ENCODE measurements at regions of chr2 and their contacts with region 1.

Region 1: GRCh38 chr2:201257956-201258665 is 2.2 kb upstream of the CASP8 start:
- DNase-seq: peak; percentile 98
- H3K4me3 Mint-ChIP-seq: peak overlapping the region; percentile 78
- H3K27ac Mint-ChIP-seq: peak overlapping the region; percentile 97
- H3K4me1 Mint-ChIP-seq: peaks cover 71% of the 10 kb centered on the region
- H3K27me3 Mint-ChIP-seq: no peaks in the 10 kb centered on the region

Region 2: DNA sequence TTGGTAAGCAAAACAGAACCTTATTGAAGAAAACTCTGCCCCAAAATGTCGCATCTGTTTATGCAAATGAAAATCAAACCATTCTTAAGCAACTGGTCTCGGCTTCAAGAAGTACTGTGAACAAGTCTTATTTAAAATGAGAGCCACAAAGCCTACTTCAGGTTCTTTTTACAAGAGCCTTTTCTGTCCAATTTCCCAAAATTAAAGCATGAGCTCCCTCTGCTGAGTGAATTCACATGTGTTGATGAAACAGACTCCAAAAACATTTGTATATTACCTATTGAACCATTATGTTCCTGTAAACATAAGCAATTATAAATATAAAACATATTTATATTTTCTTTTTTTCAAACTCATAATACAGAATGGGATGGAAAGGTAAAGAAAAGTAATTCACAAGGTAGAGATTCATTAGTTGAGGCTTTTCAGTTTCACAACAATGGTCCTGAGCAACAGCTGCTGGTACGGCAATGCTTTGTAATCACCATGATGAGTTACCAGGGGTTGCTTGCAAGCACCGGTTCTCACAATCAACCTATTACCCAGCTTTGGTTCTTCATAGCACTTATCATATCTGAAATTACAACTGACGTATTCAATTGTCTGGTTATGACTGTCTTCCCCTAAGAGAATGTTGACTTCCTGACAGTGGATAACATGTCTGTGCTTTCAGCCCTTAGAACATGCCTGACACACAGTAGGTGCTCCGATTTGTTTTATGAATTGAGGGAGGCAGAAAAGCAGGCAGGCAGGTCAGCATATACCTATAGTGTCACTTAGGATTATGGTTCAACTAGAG is 554.8 kb before region 1 on chr2:
- CTCF ChIA-PET with region 1: no interaction called
- intact Hi-C with region 1: loop called (anchors 1 kb)
- DNase-seq: peak; percentile 68
- H3K4me3 Mint-ChIP-seq: peak overlapping the region; percentile 19
- H3K27ac Mint-ChIP-seq: peak overlapping the region; percentile 83
- H3K4me1 Mint-ChIP-seq: peaks cover 55% of the 10 kb centered on the region
- H3K27me3 Mint-ChIP-seq: peaks cover 1% of the 10 kb centered on the region

Region 3: GRCh38 chr2:200888704-200889625 is 369.1 kb before region 1 on chr2 and contains the starts of genes NIF3L1 and PPIL3:
- CTCF ChIA-PET with region 1: no interaction called
- intact Hi-C with region 1: loop called (anchors 1 kb)
- DNase-seq: peak; percentile 99
- H3K4me3 Mint-ChIP-seq: peak within 1 kb of the TSS; percentile 88
- H3K27ac Mint-ChIP-seq: peak within 1 kb of the TSS; percentile 97
- H3K4me1 Mint-ChIP-seq: peaks cover 50% of the 10 kb centered on the region
- H3K27me3 Mint-ChIP-seq: no peaks in the 10 kb centered on the region
- total RNA-seq, gene NIF3L1: 31.6 to 33.3 TPM
- total RNA-seq, gene PPIL3: 81.3 to 82.2 TPM

Region 4: DNA sequence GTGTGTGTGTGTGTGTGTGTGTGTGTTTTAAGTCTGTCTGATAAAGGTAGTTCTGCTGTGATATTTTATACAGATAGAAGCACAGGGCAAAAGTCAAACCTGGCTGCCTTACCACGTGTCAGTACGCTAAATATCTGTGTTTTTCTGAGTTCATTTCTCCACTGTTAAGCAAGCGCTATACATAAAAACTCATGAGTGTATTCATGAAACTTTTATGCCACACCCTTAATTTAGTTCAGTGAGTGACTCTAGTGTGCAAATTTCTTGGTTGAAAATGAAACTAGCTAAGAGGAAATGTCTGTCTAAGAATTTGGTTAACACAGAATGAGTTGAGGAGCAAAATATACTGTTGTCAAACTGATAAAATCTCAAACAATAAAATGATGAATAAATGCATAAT is 64.0 kb before region 1 on chr2:
- CTCF ChIA-PET with region 1: no interaction called
- intact Hi-C with region 1: loop called (anchors 1 kb)
- DNase-seq: no peak
- H3K4me3 Mint-ChIP-seq: no peak overlapping the region
- H3K27ac Mint-ChIP-seq: peak overlapping the region; percentile 50
- H3K4me1 Mint-ChIP-seq: peaks cover 66% of the 10 kb centered on the region
- H3K27me3 Mint-ChIP-seq: no peaks in the 10 kb centered on the region

Region 5: DNA sequence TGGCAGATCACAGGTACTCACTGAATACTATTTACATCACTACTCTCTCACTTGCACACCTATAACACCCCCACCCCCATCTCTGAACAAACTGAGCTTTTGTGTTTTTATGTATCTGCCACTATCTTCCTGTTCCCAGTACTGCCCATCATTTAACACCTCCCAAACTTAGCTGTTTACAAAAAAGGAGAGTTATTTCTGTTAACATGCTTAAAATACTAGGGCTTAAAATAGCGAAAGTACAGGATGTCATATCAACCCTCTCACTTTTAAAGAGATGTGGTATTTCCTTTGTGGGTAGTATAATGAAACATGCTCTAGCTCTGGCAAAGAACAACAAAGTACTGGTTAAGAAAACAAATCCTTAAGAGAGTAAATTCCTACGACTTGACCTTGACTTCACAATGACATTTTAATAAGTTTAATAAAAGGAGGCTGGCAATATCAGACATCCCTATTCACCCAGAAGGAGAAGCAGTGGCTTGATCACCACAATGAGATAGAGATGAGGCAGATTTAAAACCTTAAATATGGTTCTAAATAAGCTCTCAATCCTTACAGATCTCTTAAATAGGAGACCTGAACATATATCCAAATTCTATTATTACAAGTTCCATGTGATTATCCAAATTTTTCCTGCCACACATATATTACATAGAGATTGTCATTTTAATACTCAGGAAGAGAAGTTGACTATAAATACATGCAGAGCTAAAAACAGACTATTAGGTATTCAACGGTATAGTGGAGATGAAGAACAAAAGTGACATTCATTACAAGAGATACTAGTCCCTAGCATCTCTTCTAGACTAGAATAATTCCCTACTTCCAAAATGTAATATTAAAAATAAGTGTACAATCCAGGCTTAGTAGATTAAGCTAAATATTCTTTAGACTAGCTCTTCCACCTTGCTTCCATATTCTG is 156.2 kb after region 1 on chr2:
- CTCF ChIA-PET with region 1: no interaction called
- intact Hi-C with region 1: loop called (anchors 1 kb)
- DNase-seq: peak; percentile 9
- H3K4me3 Mint-ChIP-seq: no peak overlapping the region
- H3K27ac Mint-ChIP-seq: no peak overlapping the region
- H3K4me1 Mint-ChIP-seq: peaks cover 23% of the 10 kb centered on the region
- H3K27me3 Mint-ChIP-seq: no peaks in the 10 kb centered on the region

Region 6: GRCh38 chr2:201580486-201580885 is 322.4 kb after region 1 on chr2:
- CTCF ChIA-PET with region 1: no interaction called
- intact Hi-C with region 1: no loop called
- DNase-seq: no peak
- H3K4me3 Mint-ChIP-seq: no peak overlapping the region
- H3K27ac Mint-ChIP-seq: no peak overlapping the region
- H3K4me1 Mint-ChIP-seq: no peaks in the 10 kb centered on the region
- H3K27me3 Mint-ChIP-seq: no peaks in the 10 kb centered on the region

Region 7: DNA sequence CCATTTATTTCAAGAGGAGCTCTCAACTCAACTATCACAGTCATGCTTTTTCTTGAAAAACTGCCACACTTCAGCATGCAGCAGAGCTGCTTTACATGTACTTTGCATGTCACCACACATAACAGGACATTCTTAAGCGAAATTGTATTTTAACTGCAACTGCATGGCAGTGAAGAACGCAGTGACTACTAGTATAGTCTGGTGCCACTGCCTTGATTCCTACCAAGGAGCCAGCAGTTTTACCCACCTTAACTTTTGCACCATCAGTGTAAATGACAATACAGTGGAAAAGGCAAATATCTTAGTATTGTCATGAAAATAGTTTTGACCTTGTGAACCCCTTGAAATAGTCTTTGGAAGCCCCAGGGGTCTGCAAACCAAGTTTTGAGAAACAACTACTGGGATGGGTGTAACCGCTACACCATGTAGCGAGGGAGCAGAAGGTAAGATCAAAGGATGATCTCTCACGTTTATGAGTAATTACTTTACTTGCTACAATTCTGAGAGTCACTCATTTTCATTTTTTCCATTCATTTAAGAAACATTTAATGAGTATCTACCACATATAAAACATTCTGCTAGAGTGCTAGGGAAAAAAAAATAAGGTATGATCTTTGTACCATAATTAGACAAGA is 472.7 kb after region 1 on chr2:
- CTCF ChIA-PET with region 1: no interaction called
- intact Hi-C with region 1: loop called (anchors 1 kb)
- DNase-seq: peak; percentile 41
- H3K4me3 Mint-ChIP-seq: no peak overlapping the region
- H3K27ac Mint-ChIP-seq: peak overlapping the region; percentile 30
- H3K4me1 Mint-ChIP-seq: peaks cover 11% of the 10 kb centered on the region
- H3K27me3 Mint-ChIP-seq: no peaks in the 10 kb centered on the region

Region 8: GRCh38 chr2:202643012-202643858 is 1385.1 kb after region 1 on chr2:
- CTCF ChIA-PET with region 1: no interaction called
- intact Hi-C with region 1: loop called (anchors 5 kb)
- DNase-seq: no peak
- H3K4me3 Mint-ChIP-seq: peak overlapping the region; percentile 70
- H3K27ac Mint-ChIP-seq: no peak overlapping the region
- H3K4me1 Mint-ChIP-seq: peaks cover 60% of the 10 kb centered on the region
- H3K27me3 Mint-ChIP-seq: no peaks in the 10 kb centered on the region